GM10248 (cell line): ENCODE measurements at regions of chr11 and their contacts with region 1.

Region 1: GRCh38 chr11:72091005-72091691 is 10.5 kb downstream of the LRRC51 start:
- DNase-seq: peak; percentile 78
- CTCF ChIP-seq: peak; percentile 79

Region 2: GRCh38 chr11:72015511-72016171 is 75.5 kb before region 1 on chr11:
- CTCF ChIA-PET with region 1: interaction called, 208 read pairs
- POLR2A ChIA-PET with region 1: no interaction called
- DNase-seq: no peak
- CTCF ChIP-seq: peak; percentile 71

Region 3: DNA sequence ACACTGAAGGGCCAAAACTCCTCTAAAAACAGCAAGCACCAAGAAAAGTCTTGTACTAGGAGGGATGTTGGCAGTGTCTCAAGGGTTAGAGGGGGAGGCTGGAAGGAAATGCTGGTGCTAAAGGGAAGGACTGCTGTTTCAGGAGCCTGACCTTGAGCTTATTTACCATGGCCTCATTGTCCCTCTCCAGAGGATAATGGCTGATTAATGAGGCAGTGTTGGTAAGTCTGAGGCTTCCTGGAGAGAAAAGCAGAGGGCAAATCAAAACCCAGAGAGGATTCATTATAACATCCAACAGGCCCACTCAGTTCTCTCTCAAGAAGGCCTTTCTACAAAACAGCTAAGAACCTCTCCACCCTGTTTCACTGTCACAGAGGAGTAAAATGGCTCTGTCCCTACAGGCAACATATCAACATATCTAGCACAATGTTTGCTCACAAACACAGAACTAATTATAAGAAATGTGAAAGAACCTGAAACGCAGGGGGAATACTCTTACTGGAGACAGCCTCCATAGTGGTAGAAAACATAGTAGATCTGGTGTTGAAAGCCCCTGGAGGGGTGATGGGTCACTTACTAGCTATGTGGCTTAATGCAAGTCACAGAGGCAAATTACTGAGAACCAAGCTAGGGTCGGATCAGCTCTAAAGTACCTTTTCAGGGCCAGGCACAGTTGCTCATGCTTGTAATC is 42.2 kb before region 1 on chr11:
- CTCF ChIA-PET with region 1: interaction called, 11 read pairs
- POLR2A ChIA-PET with region 1: no interaction called
- DNase-seq: no peak
- CTCF ChIP-seq: no peak

Region 4: DNA sequence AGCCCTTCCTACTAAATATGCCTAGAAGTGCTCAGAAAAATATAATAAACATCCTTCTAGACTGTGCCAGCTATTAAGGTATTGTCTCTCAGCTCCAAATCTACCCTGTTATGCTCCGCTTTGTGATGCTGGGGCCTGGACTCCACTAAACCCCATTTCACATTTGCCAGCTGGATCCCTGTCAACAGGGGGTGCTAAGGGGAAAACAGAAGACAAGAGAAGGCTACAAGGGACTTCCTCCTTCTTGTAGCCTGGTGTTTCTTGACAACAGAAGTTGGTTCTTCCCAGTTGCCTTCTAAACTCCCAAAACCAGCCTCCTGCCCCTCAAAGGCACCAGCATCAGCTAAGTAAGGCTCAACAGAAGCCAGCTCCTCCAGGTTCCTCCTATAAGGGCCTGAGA is 16.0 kb before region 1 on chr11:
- CTCF ChIA-PET with region 1: interaction called, 16 read pairs
- POLR2A ChIA-PET with region 1: no interaction called
- DNase-seq: no peak
- CTCF ChIP-seq: peak; percentile 52

Region 5: DNA sequence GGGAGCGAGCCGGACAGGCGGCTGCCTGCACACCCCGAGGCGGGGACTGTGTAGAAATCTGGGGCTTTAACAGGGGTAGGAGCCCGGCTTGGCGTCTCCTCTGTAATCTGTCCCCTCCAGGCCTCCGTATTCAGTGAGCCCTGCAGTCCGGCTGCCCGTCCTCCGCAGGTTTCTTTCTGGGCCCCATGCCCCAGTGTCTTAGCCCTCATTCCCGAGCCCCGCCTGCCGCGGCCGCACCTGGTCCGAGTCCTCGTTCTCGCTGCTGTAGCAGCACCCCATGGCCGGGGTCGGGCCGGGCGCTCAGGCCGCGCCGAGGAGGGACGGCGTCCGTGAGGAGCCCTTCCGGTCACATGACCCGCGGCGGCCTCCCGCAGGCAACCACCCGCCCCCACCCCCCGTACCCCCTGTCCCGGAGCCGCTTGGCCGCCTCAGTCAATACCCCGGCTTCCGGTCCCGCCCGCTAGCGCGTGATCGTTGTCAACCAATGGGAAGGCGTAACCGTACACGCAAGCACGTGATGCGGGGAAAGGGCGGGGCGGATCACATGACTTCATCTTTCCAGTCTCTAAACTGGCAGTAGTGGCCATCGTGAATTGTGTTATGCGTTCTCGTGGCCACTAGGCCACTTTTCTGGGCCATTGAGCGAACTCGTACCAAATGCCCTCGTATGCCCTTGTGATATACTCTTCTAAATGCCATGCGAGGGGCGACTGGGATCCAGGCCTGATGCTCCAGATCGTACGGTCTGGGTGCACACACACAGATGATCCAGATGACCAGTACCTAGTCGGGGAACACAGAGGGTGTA is 12.0 kb after region 1 on chr11 and contains the start of gene LAMTOR1:
- CTCF ChIA-PET with region 1: interaction called, 52 read pairs
- POLR2A ChIA-PET with region 1: interaction called, 3 read pairs
- DNase-seq: peak; percentile 97
- CTCF ChIP-seq: no peak

Region 6: GRCh38 chr11:72174299-72175070 is 83.3 kb after region 1 on chr11:
- CTCF ChIA-PET with region 1: no interaction called
- POLR2A ChIA-PET with region 1: no interaction called
- DNase-seq: no peak
- CTCF ChIP-seq: no peak